Astrocyte of the cerebellum (primary cell): ENCODE measurements at regions of chr1 and their contacts with region 1.

Region 1: DNA sequence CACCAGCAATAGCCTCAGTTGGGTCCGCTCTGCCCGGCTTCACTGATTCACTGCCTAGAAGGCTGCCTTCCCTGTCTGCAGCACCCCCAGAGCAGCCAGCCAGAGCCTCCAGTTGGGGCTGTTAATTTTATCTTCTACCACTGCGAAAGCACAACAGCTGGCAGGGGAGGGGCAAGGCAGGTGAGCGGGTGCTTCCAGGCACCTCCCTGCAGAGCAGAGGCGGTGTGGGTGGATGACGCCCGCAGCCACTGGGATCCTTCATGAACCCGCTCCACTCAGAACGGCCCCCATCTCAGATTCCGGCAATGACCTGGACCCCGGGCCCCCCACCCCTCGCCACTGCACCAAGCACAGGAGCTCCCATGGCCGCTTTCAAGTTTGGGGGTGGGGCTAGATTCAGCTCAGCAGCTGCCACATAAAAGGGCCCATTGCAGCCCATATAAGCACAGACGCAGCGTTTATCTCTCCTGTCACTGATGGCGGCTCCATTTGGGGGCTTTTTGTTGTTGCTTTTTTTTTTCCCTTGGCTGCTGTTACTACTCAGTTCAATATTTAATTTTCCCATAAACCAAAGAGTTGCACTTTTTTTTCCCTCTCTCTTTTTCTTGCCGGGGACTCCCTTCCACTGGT is 128.0 kb upstream of the KLHDC7A start:
- DNase-seq: no peak
- H3K4me3 ChIP-seq: no peak overlapping the region
- CTCF ChIP-seq: no peak

Region 2: GRCh38 chr1:18264450-18265039 is 88.2 kb before region 1 on chr1:
- in situ Hi-C with region 1: loop called (anchors 5 kb)
- DNase-seq: no peak
- H3K4me3 ChIP-seq: no peak overlapping the region
- CTCF ChIP-seq: no peak

Region 3: DNA sequence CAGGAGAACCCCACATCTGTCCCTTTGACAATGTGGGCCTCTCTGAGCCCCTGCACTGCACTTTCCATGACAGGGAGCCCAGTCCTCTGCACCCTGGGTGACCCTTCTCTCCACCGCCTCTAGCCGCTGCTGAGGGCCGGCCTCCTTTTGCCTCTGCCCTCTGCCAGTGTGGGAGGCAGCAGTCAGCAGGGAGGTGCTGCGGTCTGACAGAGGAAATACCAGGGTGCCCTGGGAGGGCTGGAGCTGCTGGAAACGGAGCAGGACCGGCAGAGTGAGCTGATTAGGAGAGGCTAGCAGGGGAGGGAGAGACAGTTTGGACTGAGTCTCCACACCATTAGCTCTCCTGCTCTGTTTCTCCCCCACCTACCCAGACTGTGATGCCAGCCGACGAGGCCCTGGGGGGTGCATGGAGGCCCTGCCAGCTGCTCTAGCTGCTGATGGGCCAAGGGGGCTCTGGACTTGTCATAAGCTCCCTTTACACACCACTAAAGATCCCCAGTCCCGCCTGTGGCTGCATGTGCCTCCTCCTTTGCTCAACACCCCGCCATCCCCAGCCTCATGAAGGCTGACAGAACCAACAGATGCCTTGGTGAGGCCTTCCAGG is 43.1 kb before region 1 on chr1:
- in situ Hi-C with region 1: loop called (anchors 5 kb)
- DNase-seq: no peak
- H3K4me3 ChIP-seq: no peak overlapping the region
- CTCF ChIP-seq: no peak

Region 4: GRCh38 chr1:18396247-18396980 is 43.7 kb after region 1 on chr1:
- in situ Hi-C with region 1: loop called (anchors 5 kb)
- DNase-seq: no peak
- H3K4me3 ChIP-seq: no peak overlapping the region
- CTCF ChIP-seq: no peak